Heart left ventricle (tissue), 16 donors: ENCODE measurements at regions of chr2 and their contacts with region 1.

Region 1: GRCh38 chr2:25342372-25343186 is 854 bp upstream of the DNMT3A start:
- DNase-seq: peak; percentile 87 to 92 (median 87)
- ATAC-seq: peak; percentile 76 to 93 (median 88)
- H3K4me3 ChIP-seq: peak overlapping the region; percentile 31 to 99 (median 76)
- H3K27ac ChIP-seq: peak overlapping the region; percentile 47 to 95 (median 84)
- H3K4me1 ChIP-seq: peaks cover 3 to 37% (median 33%) of the 10 kb centered on the region in 12 donors
- H3K27me3 ChIP-seq: no peaks in the 10 kb centered on the region
- CTCF ChIP-seq: peak; percentile 89 to 99 (median 98)
- POLR2A ChIP-seq: peak in 1 of 2 donors; percentile 33

Region 2: DNA sequence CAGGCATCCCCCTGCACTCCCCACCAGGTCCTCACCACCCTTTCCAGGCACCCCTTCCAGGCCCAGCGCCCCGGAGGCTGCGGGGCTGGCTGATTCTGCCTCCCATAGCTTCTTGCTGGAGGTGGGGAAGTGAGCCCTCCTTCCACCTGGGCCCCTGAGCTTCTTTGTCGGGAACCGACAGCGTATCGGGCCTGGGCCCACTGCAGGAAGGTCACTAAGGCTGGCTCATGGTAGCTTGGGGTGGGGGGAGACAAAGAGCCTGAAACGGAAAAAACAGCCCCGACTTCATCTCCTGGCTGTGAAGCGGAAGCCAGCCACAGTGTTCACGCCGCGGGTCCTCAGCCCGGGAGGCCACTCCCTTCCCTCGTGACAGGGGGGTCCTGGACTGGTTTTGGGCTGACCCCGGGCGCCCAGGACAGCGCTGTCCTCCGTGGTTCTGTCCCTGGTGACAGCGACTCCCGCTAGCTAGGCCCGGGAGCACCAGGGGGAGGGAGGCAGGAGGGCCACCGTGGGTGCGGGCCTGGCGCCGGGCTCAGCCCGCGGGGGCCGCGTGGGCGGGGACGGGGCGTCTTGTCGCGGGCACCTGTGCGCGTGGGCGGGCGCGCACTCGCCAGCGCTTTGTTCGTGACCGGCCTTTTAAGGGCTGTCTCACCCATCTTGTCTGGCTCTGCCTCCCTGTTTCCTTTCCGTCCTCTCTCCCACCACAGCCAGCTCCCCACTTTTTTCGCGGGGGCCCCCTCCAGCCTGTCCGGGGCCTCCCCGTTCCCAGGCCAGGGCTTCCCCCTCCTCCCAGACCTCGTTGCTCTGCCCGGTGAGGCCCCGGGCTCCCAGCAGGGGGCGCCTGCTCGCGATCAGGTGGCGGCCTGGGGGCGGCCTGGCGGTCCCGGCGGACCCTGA is 65.8 kb before region 1 on chr2:
- intact Hi-C with region 1: loop called in 7 of 10 experiments (anchors 2 to 5 kb)
- DNase-seq: peak; percentile 67 to 90 (median 72)
- ATAC-seq: peak in 3 of 4 donors; percentile 18 to 68 (median 56)
- H3K4me3 ChIP-seq: peak overlapping the region in 11 of 12 donors; percentile 14 to 59 (median 47)
- H3K27ac ChIP-seq: peak overlapping the region; percentile 66 to 94 (median 83)
- H3K4me1 ChIP-seq: peaks cover 0 to 76% (median 55%) of the 10 kb centered on the region in 12 donors
- H3K27me3 ChIP-seq: no peaks in the 10 kb centered on the region
- CTCF ChIP-seq: peak; percentile 70 to 92 (median 81)
- POLR2A ChIP-seq: no peak

Region 3: GRCh38 chr2:25294573-25295462 is 47.8 kb before region 1 on chr2:
- intact Hi-C with region 1: loop called in 2 of 10 experiments (anchors 2 to 5 kb)
- DNase-seq: peak; percentile 87 to 92 (median 88)
- ATAC-seq: peak; percentile 91 to 94 (median 92)
- H3K4me3 ChIP-seq: peak overlapping the region in 10 of 12 donors; percentile 10 to 46 (median 32)
- H3K27ac ChIP-seq: peak overlapping the region; percentile 79 to 99 (median 95)
- H3K4me1 ChIP-seq: peaks cover 10 to 68% (median 53%) of the 10 kb centered on the region in 12 donors
- H3K27me3 ChIP-seq: no peaks in the 10 kb centered on the region
- CTCF ChIP-seq: peak in 1 of 12 donors; percentile 1
- POLR2A ChIP-seq: peak in 1 of 2 donors; percentile 38

Region 4: GRCh38 chr2:25309402-25309801 is 33.2 kb before region 1 on chr2:
- intact Hi-C with region 1: loop called in 3 of 10 experiments (anchors 5 kb)
- DNase-seq: peak in 2 of 5 donors; percentile 56 to 62
- ATAC-seq: no peak
- H3K4me3 ChIP-seq: no peak overlapping the region
- H3K27ac ChIP-seq: no peak overlapping the region
- H3K4me1 ChIP-seq: peaks cover 0 to 97% (median 76%) of the 10 kb centered on the region in 12 donors
- H3K27me3 ChIP-seq: no peaks in the 10 kb centered on the region
- CTCF ChIP-seq: peak; percentile 13 to 56 (median 37)
- POLR2A ChIP-seq: no peak

Region 5: GRCh38 chr2:25362049-25362433 is 19.5 kb after region 1 on chr2:
- intact Hi-C with region 1: loop called in 1 of 10 experiments (anchors 2 kb)
- DNase-seq: peak; percentile 91 to 95 (median 92)
- ATAC-seq: peak; percentile 98 to 100 (median 99)
- H3K4me3 ChIP-seq: peak overlapping the region in 10 of 12 donors; percentile 12 to 57 (median 44)
- H3K27ac ChIP-seq: peak overlapping the region; percentile 7 to 90 (median 70)
- H3K4me1 ChIP-seq: peaks cover 0 to 20% (median 5%) of the 10 kb centered on the region in 12 donors
- H3K27me3 ChIP-seq: no peaks in the 10 kb centered on the region
- CTCF ChIP-seq: peak; percentile 96 to 100 (median 98)
- POLR2A ChIP-seq: peak in 1 of 2 donors; percentile 74

Region 6: DNA sequence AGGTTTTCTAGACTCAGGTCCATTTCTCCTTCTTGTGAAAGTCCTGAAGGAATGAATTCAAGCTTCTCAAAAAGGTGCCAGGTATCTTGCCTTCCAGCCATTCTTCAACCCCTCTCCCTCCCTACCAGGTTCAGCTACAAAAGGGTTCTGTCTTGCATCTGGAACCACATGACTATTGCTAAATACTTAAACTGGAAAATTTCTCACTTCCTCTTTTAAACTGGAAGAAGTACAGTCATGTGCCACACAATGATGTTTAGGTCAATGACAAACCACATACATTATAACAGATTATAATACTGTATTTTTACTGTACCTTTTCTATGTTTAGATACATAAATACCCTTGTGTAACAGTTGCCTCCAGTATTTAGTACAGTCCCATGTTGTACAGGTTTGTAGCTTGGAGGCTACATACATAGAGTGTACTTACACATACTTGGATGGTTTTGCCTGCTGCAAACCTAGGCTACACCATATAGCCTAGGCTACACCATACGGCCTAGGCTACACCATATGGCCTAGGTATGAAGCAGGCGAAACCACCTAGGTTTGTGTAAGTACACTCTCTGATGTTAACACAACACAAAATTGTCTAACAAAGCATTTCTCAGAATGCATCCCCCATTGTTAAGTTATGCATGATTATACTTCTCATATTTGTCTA is 141.2 kb after region 1 on chr2:
- intact Hi-C with region 1: no loop called
- DNase-seq: no peak
- ATAC-seq: peak in 1 of 4 donors; percentile 57
- H3K4me3 ChIP-seq: no peak overlapping the region
- H3K27ac ChIP-seq: peak overlapping the region in 1 of 12 donors; percentile 15
- H3K4me1 ChIP-seq: peaks cover 0 to 14% (median 0%) of the 10 kb centered on the region in 12 donors
- H3K27me3 ChIP-seq: no peaks in the 10 kb centered on the region
- CTCF ChIP-seq: no peak
- POLR2A ChIP-seq: no peak